Activated T-helper 1 cell treated with anti-CD3 and anti-CD28 coated beads, Interleukin-12 subunit alpha, Interleukin-12 subunit beta, Interleukin-2, Interleukin-4 antibody, amounts not matched to agents 30 ng/mL and 10 ng/mL and 1 ng/mL, durations not matched to agents 14 hours and 24 hours and 36 hours (primary cell): ENCODE measurements at regions of chr6 and their contacts with region 1.

Region 1: GRCh38 chr6:26285143-26286134 is 79.6 kb upstream of the BTN3A2 start:
- DNase-seq: peak; percentile 95
- H3K4me3 Mint-ChIP-seq: peak overlapping the region; percentile 93
- H3K27ac Mint-ChIP-seq: peak overlapping the region; percentile 93
- H3K4me1 Mint-ChIP-seq: peaks cover 44% of the 10 kb centered on the region
- H3K27me3 Mint-ChIP-seq: peaks cover 4% of the 10 kb centered on the region

Region 2: DNA sequence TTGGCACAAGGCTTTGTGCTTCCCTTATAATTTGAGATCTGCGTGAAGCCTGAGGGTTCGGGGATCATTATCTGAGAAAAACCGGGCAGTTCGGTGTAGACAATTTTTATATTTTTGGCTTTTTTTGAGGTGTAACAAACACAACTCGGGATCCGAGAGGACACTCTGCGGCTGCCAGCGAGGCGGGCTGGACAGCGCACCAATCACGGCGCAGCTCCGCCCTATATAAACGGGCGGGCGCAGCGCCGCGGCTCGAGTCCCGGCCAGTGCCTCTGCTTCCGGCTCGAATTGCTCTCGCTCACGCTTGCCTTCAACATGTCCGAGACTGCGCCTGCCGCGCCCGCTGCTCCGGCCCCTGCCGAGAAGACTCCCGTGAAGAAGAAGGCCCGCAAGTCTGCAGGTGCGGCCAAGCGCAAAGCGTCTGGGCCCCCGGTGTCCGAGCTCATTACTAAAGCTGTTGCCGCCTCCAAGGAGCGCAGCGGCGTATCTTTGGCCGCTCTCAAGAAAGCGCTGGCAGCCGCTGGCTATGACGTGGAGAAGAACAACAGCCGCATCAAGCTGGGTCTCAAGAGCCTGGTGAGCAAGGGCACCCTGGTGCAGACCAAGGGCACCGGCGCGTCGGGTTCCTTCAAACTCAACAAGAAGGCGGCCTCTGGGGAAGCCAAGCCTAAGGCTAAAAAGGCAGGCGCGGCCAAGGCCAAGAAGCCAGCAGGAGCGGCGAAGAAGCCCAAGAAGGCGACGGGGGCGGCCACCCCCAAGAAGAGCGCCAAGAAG is 129.2 kb before region 1 on chr6:
- intact Hi-C with region 1: loop called (anchors 1 kb)
- DNase-seq: peak; percentile 89
- H3K4me3 Mint-ChIP-seq: peak overlapping the region; percentile 91
- H3K27ac Mint-ChIP-seq: peak overlapping the region; percentile 95
- H3K4me1 Mint-ChIP-seq: peaks cover 56% of the 10 kb centered on the region
- H3K27me3 Mint-ChIP-seq: peaks cover 3% of the 10 kb centered on the region

Region 3: DNA sequence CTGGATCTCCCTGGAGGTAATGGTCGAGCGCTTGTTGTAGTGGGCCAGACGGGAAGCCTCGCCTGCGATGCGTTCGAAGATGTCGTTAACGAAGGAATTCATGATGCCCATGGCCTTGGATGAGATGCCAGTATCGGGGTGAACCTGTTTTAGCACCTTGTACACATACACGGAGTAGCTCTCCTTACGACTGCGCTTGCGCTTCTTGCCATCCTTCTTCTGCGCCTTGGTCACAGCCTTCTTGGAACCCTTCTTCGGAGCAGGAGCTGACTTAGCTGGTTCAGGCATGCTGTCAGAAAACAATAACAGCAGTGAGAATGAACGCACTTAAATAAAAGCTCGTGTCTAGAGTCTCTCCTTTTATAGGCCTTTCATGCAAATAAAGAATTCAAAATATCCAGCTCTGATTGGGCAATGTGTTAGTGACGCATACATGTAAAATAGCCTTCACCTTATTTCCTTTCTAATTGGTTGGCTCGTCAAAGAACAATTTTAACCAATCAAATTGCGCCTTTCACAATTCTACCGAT is 69.0 kb before region 1 on chr6:
- intact Hi-C with region 1: loop called (anchors 1 kb)
- DNase-seq: peak; percentile 86
- H3K4me3 Mint-ChIP-seq: no peak overlapping the region
- H3K27ac Mint-ChIP-seq: no peak overlapping the region
- H3K4me1 Mint-ChIP-seq: peaks cover 11% of the 10 kb centered on the region
- H3K27me3 Mint-ChIP-seq: no peaks in the 10 kb centered on the region

Region 4: DNA sequence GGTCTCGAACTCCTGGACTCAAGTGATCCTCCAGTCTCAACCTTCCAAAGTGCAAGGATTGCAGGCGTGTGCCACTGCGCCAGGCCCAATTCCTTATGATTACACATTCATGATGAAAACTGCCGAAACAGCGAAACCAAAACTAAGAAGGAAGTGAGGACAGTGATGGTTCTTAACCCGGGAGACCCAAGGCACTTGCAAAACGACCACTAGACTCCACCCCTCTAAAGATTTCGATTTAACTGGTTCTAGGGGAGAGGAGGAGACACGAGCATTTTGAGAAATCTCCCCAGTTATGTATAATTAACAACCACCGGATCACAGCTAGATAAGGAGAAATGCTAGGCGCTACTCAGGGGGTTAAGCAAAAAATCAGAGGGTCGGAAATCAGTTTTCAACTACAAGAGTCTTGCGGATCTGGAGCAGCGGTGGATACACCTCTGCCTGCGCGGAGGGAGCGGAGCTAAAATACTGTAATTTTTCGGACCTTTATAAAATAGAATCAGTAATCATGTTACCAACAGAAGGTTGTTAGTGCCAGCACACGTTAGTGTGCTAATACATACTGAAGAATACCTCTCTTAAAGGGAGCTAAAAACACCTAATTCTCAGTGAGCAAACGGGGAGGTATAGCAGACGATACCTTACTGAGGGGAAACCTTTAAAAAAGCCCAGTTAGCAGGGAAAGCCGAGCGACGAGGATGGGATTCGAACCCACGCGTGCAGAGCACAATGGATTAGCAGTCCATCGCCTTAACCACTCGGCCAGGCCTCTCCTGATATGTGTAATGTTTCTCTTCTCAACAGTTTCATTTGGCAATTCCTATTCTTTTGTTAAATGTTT is 19.6 kb after region 1 on chr6:
- intact Hi-C with region 1: loop called (anchors 1 kb)
- DNase-seq: peak; percentile 41
- H3K4me3 Mint-ChIP-seq: peak overlapping the region; percentile 85
- H3K27ac Mint-ChIP-seq: peak overlapping the region; percentile 89
- H3K4me1 Mint-ChIP-seq: peaks cover 69% of the 10 kb centered on the region
- H3K27me3 Mint-ChIP-seq: peaks cover 3% of the 10 kb centered on the region

Region 5: DNA sequence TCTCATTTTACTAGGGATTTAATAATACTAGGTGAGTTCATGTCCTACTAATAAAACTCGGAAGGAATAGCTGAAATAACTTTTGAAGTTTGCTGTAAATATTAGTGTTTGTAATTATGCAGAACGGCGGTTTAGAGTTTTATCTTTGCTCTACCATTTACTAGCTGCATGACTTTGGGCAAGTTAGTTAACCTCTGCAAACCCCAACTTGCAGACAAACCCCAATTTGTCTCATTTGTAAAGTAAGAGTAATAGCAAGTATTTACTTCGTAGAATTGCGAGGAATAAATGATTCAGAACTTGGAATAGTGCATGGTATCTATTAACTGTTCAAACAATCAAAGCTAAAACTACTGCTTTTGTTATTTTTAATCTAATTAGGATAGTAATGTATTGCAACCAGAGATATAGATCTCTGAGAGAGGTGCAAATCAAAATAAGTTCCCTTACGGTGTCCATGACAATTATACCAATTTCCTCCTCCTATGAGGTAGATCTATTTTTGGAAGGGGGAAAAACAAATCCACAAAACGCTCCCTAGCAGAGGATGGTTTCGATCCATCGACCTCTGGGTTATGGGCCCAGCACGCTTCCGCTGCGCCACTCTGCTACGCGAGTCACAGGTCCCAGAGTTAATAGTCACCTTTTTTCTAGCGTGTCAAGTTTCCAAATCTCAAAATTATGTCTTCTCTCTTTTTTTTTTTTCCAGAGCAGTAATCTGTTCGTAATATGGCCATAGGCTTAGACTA is 44.5 kb after region 1 on chr6:
- intact Hi-C with region 1: loop called (anchors 2 kb)
- DNase-seq: peak; percentile 48
- H3K4me3 Mint-ChIP-seq: peak overlapping the region; percentile 82
- H3K27ac Mint-ChIP-seq: peak overlapping the region; percentile 93
- H3K4me1 Mint-ChIP-seq: peaks cover 58% of the 10 kb centered on the region
- H3K27me3 Mint-ChIP-seq: peaks cover 23% of the 10 kb centered on the region

Region 6: DNA sequence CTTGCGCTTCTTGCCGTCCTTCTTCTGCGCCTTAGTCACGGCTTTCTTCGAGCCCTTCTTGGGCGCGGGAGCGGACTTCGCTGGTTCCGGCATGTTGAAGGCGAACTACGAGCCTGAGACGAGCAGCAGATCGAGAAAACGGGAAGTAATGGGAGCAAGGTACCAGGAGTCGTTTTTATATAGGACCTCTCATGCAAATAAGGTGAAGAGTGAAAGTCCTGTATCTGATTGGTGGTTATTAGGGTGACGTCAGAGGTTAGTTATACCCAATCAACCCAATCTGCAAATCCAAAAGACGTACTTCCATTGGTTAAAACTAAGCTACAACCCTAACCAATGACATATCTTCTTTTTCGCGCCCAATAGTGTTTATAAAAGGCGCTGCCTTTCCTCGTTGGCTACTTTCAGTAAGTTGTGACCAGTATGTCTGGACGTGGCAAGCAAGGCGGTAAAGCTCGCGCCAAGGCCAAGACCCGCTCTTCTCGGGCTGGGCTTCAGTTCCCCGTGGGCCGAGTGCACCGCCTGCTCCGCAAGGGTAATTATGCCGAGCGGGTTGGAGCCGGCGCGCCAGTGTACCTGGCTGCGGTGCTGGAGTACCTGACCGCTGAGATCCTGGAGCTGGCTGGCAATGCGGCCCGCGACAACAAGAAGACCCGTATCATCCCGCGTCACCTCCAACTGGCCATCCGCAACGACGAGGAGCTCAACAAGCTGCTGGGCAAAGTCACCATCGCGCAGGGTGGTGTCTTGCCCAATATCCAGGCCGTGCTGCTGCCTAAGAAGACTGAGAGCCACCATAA is 861.5 kb after region 1 on chr6:
- intact Hi-C with region 1: loop called (anchors 1 kb)
- DNase-seq: peak; percentile 82
- H3K4me3 Mint-ChIP-seq: no peak overlapping the region
- H3K27ac Mint-ChIP-seq: no peak overlapping the region
- H3K4me1 Mint-ChIP-seq: peaks cover 17% of the 10 kb centered on the region
- H3K27me3 Mint-ChIP-seq: no peaks in the 10 kb centered on the region